ENCODE measurements at regions of chr10 and their contacts with region 1.

Region 1: DNA sequence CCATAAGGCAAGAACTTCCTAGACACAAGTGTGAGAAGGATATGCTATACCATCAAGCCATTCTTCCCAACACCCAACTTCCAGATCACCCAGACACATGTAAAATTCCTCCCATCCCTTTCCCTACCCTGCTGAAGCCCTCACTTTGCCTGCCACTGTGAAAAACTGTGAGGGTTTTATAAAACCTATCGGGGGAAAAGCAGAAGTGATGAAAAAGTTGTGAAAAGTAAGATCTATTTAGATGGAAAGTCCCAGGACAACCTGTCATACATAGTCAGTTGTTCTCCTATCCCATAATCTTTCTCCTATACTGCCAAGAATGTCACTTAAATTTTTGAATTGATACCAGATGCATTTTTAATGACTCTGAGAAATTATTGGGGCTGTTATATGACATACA is 39.0 kb upstream of the PPP3CB start:
- DNase-seq: no peak
- H3K4me3 ChIP-seq: no peak overlapping the region
- CTCF ChIP-seq: no peak

Region 2: DNA sequence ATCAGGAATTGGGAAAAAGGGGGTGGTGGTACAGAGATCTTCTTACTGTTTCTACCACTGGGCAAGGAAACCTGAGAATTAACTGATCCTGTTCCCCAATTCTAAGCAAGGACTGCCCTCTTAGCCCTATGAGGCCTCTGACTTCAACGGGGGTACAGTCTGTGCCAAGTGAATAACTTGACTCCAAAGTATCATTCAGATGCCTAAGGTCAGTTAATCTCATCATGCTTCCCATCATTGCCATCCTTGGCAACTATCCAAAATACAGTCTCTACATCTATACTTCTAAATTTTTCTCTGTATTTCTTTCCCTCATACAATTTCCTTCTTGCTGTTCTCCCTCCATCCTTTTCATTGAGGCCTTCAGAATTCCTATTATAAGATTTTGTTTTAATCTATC is 49.5 kb before region 1 on chr10:
- in situ Hi-C with region 1: no loop called
- DNase-seq: no peak
- H3K4me3 ChIP-seq: no peak overlapping the region
- CTCF ChIP-seq: no peak

Region 3: DNA sequence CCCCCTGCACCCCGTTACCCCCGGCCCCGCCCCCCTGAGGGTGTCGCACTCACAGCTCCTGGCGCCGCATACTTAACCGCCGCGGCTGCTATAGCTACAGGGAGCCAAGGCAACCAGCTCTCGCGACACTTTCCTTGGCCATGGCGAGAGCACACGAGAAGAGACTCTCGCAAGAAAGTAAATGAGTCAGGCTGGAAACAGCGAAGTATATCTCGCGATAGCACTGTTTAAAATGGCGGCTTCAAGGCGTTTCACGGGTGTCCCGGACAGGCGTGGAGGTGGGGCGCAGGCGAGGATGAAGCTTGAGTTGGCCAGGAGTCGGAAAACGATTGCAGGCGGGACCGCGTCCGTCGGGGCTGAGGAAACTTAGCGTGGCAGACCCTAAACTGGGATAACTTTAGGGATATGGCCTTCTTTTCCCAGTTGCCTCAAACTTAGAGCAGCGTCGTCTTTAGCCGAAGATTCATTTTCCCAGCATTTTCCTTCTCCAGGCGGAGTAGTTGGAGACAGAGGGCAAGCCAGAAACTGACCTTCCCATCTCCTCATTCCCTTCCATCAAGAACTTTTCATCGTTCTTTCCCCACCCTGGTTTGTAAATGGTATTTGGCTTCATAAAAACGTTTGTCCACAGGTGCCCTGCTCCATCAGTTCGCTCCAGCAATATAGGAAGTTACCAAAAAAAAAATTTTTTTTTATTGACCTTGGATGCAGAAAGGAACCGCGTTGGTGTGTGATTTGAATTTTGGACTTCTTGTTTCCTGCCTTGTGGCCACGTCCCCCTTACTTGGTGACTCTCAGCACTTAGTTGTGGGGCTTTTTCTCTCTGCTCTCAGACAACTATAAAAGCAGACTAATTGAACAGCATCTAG is 91.3 kb after region 1 on chr10:
- in situ Hi-C with region 1: loop called (anchors 5 kb)
- DNase-seq: peak; percentile 97
- H3K4me3 ChIP-seq: peak overlapping the region; percentile 93
- CTCF ChIP-seq: no peak